Activated CD8-positive, alpha-beta memory T cell treated with anti-CD3 and anti-CD28 coated beads, Interleukin-2, amount 10 ng/mL, durations not matched to agents 7 days and 5 days (primary cell): ENCODE measurements at regions of chr17 and their contacts with region 1.

Region 1: GRCh38 chr17:18960803-18961511 is 9.0 kb downstream of the SLC5A10 start:
- DNase-seq: peak; percentile 84
- ATAC-seq: peak; percentile 95
- H3K4me3 Mint-ChIP-seq: no peak overlapping the region
- H3K27ac Mint-ChIP-seq: no peak overlapping the region
- H3K4me1 Mint-ChIP-seq: peaks cover 7% of the 10 kb centered on the region
- H3K27me3 Mint-ChIP-seq: no peaks in the 10 kb centered on the region

Region 2: DNA sequence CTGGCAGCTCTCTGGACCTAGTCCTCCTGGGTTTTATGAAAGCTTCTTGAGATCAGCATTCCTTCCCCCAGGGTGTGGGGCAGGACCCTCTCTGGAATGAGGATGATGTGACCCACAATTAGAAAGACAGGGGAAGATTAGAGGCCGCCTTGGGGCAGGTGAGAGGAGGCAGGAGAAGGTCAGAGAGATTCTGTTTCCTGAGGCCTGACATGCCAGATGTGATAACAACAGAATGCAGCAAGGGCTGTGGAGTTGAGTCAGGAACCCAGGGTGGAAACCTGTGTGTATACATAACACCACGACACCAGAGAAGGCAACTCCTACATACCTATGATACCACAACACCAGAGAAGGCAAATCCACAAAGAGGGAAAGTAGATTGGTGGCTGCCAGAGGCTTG is 14.4 kb before region 1 on chr17:
- CTCF ChIA-PET with region 1: interaction called, 18 read pairs
- DNase-seq: no peak
- ATAC-seq: no peak
- H3K4me3 Mint-ChIP-seq: no peak overlapping the region
- H3K27ac Mint-ChIP-seq: no peak overlapping the region
- H3K4me1 Mint-ChIP-seq: no peaks in the 10 kb centered on the region
- H3K27me3 Mint-ChIP-seq: peaks cover 20% of the 10 kb centered on the region

Region 3: DNA sequence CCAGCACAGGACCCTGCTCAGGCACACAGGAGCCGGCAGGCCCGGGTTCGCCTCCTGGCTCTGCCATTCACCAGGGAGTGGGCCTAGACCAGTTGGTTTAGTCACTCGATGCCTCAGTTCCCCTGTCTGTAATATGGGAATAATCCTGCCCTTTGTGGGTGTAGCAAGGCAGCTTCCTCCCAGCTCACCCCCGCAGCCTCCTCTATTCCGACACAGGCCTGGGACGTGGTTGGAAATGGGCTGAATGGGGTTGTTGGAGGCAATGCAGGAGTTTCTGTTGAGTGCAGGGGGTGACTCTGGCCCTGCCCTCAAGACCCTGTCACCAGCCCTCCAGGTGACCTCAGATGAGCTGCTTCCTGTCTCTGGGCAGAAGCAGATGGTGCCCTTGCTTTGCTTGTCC is 10.8 kb after region 1 on chr17:
- CTCF ChIA-PET with region 1: interaction called, 12 read pairs
- DNase-seq: no peak
- ATAC-seq: no peak
- H3K4me3 Mint-ChIP-seq: no peak overlapping the region
- H3K27ac Mint-ChIP-seq: no peak overlapping the region
- H3K4me1 Mint-ChIP-seq: no peaks in the 10 kb centered on the region
- H3K27me3 Mint-ChIP-seq: no peaks in the 10 kb centered on the region

Region 4: GRCh38 chr17:19004421-19005136 is 43.6 kb after region 1 on chr17 and contains the start of gene FAM83G:
- CTCF ChIA-PET with region 1: interaction called, 15 read pairs
- DNase-seq: peak; percentile 88
- ATAC-seq: peak; percentile 88
- H3K4me3 Mint-ChIP-seq: peak within 1 kb of the TSS; percentile 81
- H3K27ac Mint-ChIP-seq: peak within 1 kb of the TSS; percentile 70
- H3K4me1 Mint-ChIP-seq: peaks cover 19% of the 10 kb centered on the region
- H3K27me3 Mint-ChIP-seq: peaks cover 15% of the 10 kb centered on the region
- total RNA-seq, gene FAM83G: 4.7 to 4.8 TPM